ENCODE measurements at regions of chr6 and their contacts with region 1.

Region 1: DNA sequence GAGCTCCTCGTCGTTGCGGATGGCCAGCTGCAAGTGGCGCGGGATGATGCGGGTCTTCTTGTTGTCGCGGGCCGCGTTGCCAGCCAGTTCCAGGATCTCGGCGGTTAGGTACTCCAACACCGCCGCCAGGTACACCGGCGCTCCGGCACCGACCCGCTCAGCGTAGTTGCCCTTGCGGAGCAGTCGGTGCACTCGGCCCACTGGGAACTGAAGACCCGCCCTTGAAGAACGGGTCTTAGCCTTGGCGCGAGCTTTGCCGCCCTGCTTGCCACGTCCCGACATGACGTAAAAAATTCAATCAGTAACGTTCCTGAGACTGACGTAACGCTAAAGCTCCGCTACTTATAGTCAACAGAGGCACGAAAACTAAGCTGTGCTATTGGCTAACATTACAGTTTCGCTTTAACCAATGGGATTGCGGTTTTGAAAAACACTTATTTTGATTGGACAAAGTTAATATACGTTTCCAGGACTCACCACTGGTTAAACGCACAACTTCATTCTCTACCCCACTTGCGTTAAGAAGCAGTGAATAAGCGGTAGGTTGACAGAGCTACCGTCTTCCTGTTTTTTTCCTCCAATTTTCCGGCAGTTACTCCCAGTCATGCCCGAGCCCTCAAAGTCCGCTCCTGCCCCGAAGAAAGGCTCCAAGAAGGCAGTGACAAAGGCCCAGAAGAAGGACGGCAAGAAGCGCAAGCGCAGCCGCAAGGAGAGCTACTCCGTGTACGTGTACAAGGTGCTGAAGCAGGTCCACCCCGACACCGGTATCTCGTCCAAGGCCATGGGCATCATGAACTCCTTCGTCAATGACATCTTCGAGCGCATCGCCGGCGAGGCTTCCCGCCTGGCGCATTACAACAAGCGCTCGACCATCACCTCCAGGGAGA is 73.9 kb downstream of the OR2B2 start:
- DNase-seq: peak; percentile 100
- ATAC-seq: peak; percentile 86
- H3K4me3 ChIP-seq: peak overlapping the region; percentile 63
- H3K27ac ChIP-seq: peak overlapping the region; percentile 88
- H3K4me1 ChIP-seq: no peaks in the 10 kb centered on the region
- H3K27me3 ChIP-seq: no peaks in the 10 kb centered on the region
- CTCF ChIP-seq: no peak
- POLR2A ChIP-seq: peak; percentile 97
- RAD21 ChIP-seq: no peak

Region 2: GRCh38 chr6:26025894-26026832 is 1812.1 kb before region 1 on chr6:
- CTCF ChIA-PET with region 1: no interaction called
- POLR2A ChIA-PET with region 1: interaction called, 3 read pairs
- dilution Hi-C with region 1: no loop called
- in situ Hi-C with region 1: no loop called
- intact Hi-C with region 1: loop called (anchors 10 kb)
- DNase-seq: peak; percentile 99
- ATAC-seq: peak; percentile 41
- H3K4me3 ChIP-seq: peak overlapping the region; percentile 68; the same call in 1 of the 2 replicates
- H3K27ac ChIP-seq: peak overlapping the region; percentile 59
- H3K4me1 ChIP-seq: peaks cover 4% of the 10 kb centered on the region
- H3K27me3 ChIP-seq: no peaks in the 10 kb centered on the region
- CTCF ChIP-seq: peak; percentile 96
- POLR2A ChIP-seq: 0 out of 2 replicates have a peak, but pooled peaks have one; percentile 38
- RAD21 ChIP-seq: peak; percentile 72

Region 3: GRCh38 chr6:26204332-26205165 is 1633.8 kb before region 1 on chr6:
- CTCF ChIA-PET with region 1: no interaction called
- POLR2A ChIA-PET with region 1: no interaction called
- dilution Hi-C with region 1: no loop called
- in situ Hi-C with region 1: loop called (anchors 25 kb)
- intact Hi-C with region 1: no loop called
- DNase-seq: peak; percentile 99
- ATAC-seq: peak; percentile 79
- H3K4me3 ChIP-seq: peak overlapping the region; percentile 88
- H3K27ac ChIP-seq: peak overlapping the region; percentile 95
- H3K4me1 ChIP-seq: no peaks in the 10 kb centered on the region; the same call in 1 of the 2 replicates
- H3K27me3 ChIP-seq: no peaks in the 10 kb centered on the region
- CTCF ChIP-seq: peak; percentile 53
- POLR2A ChIP-seq: peak; percentile 99
- RAD21 ChIP-seq: 0 out of 2 replicates have a peak, but pooled peaks have one; percentile 1

Region 4: GRCh38 chr6:27720607-27721580 is 117.4 kb before region 1 on chr6:
- CTCF ChIA-PET with region 1: no interaction called
- POLR2A ChIA-PET with region 1: no interaction called
- dilution Hi-C with region 1: no loop called
- in situ Hi-C with region 1: no loop called
- intact Hi-C with region 1: no loop called
- DNase-seq: peak; percentile 24
- ATAC-seq: peak; percentile 70
- H3K4me3 ChIP-seq: no peak overlapping the region
- H3K27ac ChIP-seq: no peak overlapping the region
- H3K4me1 ChIP-seq: no peaks in the 10 kb centered on the region
- H3K27me3 ChIP-seq: no peaks in the 10 kb centered on the region
- CTCF ChIP-seq: no peak
- POLR2A ChIP-seq: no peak
- RAD21 ChIP-seq: no peak

Region 5: DNA sequence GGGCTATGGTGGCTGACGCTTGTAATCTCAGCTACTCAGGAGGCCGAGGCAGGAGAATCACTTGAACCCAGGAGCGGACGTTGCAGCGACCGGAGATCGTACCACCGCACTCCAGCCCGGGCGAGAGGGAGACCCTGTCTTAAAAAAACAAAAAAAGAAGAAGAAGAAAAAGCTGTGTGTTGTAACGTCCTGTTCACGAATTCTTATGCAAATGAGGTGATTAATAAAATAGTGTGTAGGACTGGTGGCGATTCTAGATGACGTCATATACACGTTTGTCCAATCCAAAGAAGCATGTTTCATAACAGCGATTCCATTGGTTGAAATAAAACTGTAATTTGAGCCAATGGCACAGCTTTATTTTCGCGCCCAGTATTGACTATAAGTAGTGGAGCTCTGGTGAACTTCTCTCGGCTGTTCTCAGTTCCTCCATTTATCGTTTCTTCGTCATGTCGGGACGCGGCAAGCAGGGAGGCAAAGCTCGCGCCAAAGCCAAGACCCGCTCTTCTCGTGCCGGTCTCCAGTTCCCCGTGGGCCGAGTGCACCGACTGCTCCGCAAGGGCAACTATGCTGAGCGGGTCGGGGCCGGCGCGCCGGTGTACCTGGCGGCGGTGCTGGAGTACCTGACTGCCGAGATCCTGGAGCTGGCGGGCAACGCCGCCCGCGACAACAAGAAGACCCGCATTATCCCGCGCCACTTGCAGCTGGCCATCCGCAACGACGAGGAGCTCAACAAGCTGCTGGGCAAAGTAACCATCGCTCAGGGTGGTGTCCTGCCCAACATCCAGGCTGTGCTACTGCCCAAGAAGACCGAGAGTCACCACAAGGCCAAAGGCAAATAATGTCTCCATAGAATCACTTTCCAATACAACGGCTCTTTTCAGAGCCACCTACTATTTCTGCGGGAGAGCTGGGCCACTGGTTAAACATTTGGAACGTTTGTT is 26.9 kb after region 1 on chr6:
- CTCF ChIA-PET with region 1: interaction called, 3 read pairs
- POLR2A ChIA-PET with region 1: interaction called, 61 read pairs
- dilution Hi-C with region 1: no loop called
- in situ Hi-C with region 1: loop called (anchors 5 kb)
- intact Hi-C with region 1: loop called (anchors 1 kb)
- DNase-seq: peak; percentile 99
- ATAC-seq: peak; percentile 75
- H3K4me3 ChIP-seq: peak overlapping the region; percentile 76
- H3K27ac ChIP-seq: peak overlapping the region; percentile 77
- H3K4me1 ChIP-seq: peaks cover 9% of the 10 kb centered on the region
- H3K27me3 ChIP-seq: no peaks in the 10 kb centered on the region
- CTCF ChIP-seq: no peak
- POLR2A ChIP-seq: peak; percentile 94
- RAD21 ChIP-seq: no peak

Region 6: DNA sequence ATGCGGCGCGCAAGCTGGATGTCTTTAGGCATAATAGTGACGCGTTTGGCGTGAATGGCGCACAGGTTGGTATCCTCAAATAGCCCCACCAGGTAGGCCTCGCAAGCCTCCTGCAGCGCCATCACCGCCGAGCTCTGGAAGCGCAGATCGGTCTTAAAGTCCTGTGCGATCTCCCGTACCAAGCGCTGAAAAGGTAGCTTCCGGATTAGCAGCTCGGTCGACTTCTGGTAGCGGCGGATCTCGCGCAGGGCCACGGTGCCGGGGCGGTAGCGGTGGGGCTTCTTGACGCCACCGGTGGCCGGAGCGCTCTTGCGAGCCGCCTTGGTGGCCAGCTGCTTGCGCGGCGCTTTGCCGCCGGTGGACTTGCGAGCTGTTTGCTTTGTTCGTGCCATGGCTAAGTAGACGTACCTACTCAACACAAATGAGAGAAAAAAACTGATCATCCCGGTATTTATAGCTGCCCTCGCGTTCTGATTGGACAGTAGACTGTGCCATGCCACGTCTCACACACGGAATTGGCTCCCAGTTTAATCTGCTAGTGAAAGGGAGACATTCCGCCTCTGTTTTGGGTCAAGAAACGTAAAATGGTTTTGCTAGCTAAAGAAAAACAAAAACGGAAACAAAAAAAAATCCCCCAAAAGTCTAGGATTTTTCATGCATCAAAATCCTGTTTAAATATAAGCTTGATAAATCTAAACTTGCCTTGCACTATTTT is 33.8 kb after region 1 on chr6:
- CTCF ChIA-PET with region 1: interaction called, 7 read pairs
- POLR2A ChIA-PET with region 1: interaction called, 61 read pairs
- dilution Hi-C with region 1: no loop called
- in situ Hi-C with region 1: loop called (anchors 5 kb)
- intact Hi-C with region 1: loop called (anchors 2 kb)
- DNase-seq: peak; percentile 97
- ATAC-seq: peak; percentile 76
- H3K4me3 ChIP-seq: peak overlapping the region; percentile 79
- H3K27ac ChIP-seq: peak overlapping the region; percentile 95
- H3K4me1 ChIP-seq: no peaks in the 10 kb centered on the region
- H3K27me3 ChIP-seq: no peaks in the 10 kb centered on the region
- CTCF ChIP-seq: peak; percentile 24; the same call in 1 of the 2 replicates
- POLR2A ChIP-seq: peak; percentile 99
- RAD21 ChIP-seq: no peak

Region 7: GRCh38 chr6:27882624-27883023 is 44.3 kb after region 1 on chr6:
- CTCF ChIA-PET with region 1: no interaction called
- POLR2A ChIA-PET with region 1: no interaction called
- dilution Hi-C with region 1: no loop called
- in situ Hi-C with region 1: no loop called
- intact Hi-C with region 1: no loop called
- DNase-seq: no peak
- ATAC-seq: no peak
- H3K4me3 ChIP-seq: no peak overlapping the region
- H3K27ac ChIP-seq: no peak overlapping the region
- H3K4me1 ChIP-seq: no peaks in the 10 kb centered on the region
- H3K27me3 ChIP-seq: no peaks in the 10 kb centered on the region
- CTCF ChIP-seq: no peak
- POLR2A ChIP-seq: no peak
- RAD21 ChIP-seq: no peak

Region 8: GRCh38 chr6:27902335-27903314 is 64.3 kb after region 1 on chr6:
- CTCF ChIA-PET with region 1: no interaction called
- POLR2A ChIA-PET with region 1: no interaction called
- dilution Hi-C with region 1: no loop called
- in situ Hi-C with region 1: no loop called
- intact Hi-C with region 1: no loop called
- DNase-seq: peak; percentile 78
- ATAC-seq: peak; percentile 94
- H3K4me3 ChIP-seq: peak overlapping the region; percentile 66
- H3K27ac ChIP-seq: no peak overlapping the region
- H3K4me1 ChIP-seq: no peaks in the 10 kb centered on the region
- H3K27me3 ChIP-seq: no peaks in the 10 kb centered on the region
- CTCF ChIP-seq: no peak
- POLR2A ChIP-seq: no peak
- RAD21 ChIP-seq: no peak